ENCODE measurements at regions of chr1 and their contacts with region 1.

Region 1: DNA sequence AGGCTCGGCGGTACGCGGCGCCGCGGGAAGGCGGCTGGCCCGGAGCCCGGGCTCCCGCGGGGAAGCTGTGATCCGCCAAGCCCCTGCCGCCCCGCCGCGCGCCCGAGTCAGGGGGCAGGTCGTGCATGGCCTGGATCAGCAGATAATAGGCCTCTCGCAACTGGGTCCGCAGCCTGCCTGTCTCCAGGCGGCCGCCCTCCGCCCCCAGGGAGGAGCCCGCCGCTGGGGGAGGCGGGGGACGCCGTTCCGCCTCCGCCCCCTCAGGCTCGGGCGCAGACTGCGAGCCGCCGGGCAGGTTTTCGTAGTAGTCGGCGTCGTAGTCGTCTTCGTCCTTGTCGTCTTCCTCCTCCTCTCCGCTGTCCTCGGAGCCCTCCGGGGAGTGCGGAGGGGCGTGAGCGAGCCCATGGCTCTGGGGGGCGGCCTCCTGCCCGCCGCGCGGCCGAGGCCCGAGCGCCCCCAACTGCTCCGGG is at the start of gene SYDE2:
- DNase-seq: peak; percentile 72 to 91 (median 89)
- ATAC-seq: peak; percentile 90
- H3K4me3 ChIP-seq: peak within 1 kb of the TSS; percentile 84
- H3K4me3 Mint-ChIP-seq: peak within 1 kb of the TSS; percentile 86 to 100 (median 98)
- H3K27ac ChIP-seq: peak within 1 kb of the TSS; percentile 96
- H3K27ac Mint-ChIP-seq: peak within 1 kb of the TSS; percentile 88 to 100 (median 99)
- H3K4me1 ChIP-seq: peaks cover 7 to 11% of the 10 kb centered on the region in 2 donors
- H3K4me1 Mint-ChIP-seq: peaks cover 15 to 61% (median 53%) of the 10 kb centered on the region in 7 donors
- H3K27me3 ChIP-seq: no peaks in the 10 kb centered on the region
- H3K27me3 Mint-ChIP-seq: peaks cover 0 to 46% (median 0%) of the 10 kb centered on the region in 5 donors
- total RNA-seq, gene SYDE2: 1.2 to 9.1 (median 8.4) TPM

Region 2: DNA sequence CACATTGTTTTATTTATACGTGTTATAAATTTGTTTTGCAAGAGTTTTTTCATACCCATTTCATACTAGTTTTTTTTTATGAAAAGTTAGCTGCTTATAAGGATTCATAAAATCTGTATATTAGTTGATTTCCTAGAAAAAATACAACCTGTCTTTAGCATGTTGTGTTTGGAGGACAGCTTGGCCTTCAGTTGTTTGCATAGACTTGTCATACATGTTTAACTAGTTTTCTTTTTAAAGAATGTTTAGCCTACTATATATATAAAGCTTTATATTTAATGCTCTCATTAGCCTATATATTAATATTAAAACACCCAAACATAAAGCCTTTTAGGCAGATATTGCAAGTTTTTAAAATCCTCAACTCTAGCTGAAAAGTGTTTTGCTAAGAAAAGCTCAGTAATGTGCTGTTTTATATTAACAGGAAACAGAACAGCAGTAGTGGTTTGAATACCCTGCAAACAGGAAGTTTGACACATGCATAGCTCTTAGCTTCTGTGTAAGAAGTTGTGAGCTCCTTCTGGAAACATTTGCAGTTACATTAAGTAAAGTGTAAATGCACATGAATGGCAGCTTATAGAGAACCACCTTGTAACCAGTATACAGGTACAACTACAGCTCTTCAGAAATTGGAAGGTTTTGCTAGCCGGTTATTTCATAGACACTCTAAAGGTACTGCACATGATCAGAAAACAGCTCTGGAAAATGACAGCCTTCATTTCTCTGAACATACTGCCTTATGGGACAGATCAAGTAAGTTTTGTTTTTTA is 1056.9 kb before region 1 on chr1 and contains the start of gene PRKACB:
- CTCF ChIA-PET with region 1: no interaction called
- POLR2A ChIA-PET with region 1: no interaction called
- intact Hi-C with region 1: loop called in 1 of 2 experiments (anchors 5 kb)
- DNase-seq: peak in 7 of 9 donors; percentile 59 to 79 (median 70)
- ATAC-seq: peak; percentile 94
- H3K4me3 ChIP-seq: peak within 1 kb of the TSS; percentile 71
- H3K4me3 Mint-ChIP-seq: peak within 1 kb of the TSS; percentile 88 to 100 (median 96)
- H3K27ac ChIP-seq: peak within 1 kb of the TSS; percentile 74
- H3K27ac Mint-ChIP-seq: peak within 1 kb of the TSS; percentile 97 to 100 (median 99)
- H3K4me1 ChIP-seq: peaks cover 27 to 33% of the 10 kb centered on the region in 2 donors
- H3K4me1 Mint-ChIP-seq: peaks cover 17 to 51% (median 39%) of the 10 kb centered on the region in 7 donors
- H3K27me3 ChIP-seq: no peaks in the 10 kb centered on the region
- H3K27me3 Mint-ChIP-seq: no peaks in the 10 kb centered on the region
- total RNA-seq, gene PRKACB: 71.1 to 176 (median 89.3) TPM

Region 3: DNA sequence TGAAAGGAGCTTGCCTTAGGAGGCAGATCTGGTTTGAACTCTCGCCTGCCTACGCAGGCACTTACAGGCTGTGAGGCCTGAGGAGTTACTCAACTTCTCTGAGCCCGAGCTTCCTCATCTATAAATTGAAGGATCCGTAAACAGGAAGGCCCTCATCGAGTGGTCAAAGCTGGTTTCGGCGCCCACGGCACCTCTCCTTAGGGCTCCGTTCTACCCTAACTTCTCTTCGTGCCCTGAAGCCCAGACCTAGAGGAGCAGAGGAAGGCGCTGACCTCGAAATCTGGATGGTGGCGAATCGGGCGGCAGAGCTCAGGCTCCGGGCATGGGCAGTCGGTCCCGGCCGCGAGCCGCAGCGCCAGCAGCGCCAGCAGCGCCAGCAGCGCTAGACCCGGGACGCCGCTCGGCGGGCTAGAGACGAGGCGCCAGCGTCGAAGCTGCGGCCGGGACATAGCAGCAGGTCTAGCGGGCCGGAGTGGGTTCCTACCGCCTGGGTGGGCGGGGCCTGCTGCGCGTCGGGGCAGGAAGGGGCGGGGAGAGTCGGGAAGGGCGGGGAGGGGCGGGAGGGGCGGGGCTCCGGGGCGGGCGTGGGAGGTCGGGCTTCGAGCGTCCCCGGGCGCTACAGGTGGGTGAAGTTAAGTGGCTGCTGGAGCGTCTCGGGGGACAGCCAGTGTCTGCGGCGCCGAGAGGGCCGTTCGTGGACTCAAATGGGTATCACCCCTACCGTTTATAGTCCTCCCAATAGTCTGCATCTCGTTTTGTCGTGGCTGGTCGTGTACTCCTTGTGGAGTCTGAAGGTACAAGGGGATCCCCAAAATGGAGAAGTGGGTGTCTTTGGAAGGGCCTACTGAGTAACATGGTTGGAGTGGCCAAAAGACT is 626.7 kb before region 1 on chr1 and contains the start of gene CTBS:
- CTCF ChIA-PET with region 1: no interaction called
- POLR2A ChIA-PET with region 1: interaction called, 3 read pairs
- intact Hi-C with region 1: loop called in 1 of 2 experiments (anchors 5 kb)
- DNase-seq: peak; percentile 69 to 84 (median 82)
- ATAC-seq: peak; percentile 96
- H3K4me3 ChIP-seq: peak within 1 kb of the TSS; percentile 77
- H3K4me3 Mint-ChIP-seq: peak within 1 kb of the TSS; percentile 97 to 99 (median 99)
- H3K27ac ChIP-seq: peak within 1 kb of the TSS; percentile 99
- H3K27ac Mint-ChIP-seq: peak within 1 kb of the TSS; percentile 98 to 100 (median 100)
- H3K4me1 ChIP-seq: peaks cover 9 to 13% of the 10 kb centered on the region in 2 donors
- H3K4me1 Mint-ChIP-seq: peaks cover 29 to 51% (median 40%) of the 10 kb centered on the region in 7 donors
- H3K27me3 ChIP-seq: no peaks in the 10 kb centered on the region
- H3K27me3 Mint-ChIP-seq: peaks cover 0 to 2% (median 0%) of the 10 kb centered on the region in 5 donors
- total RNA-seq, gene CTBS: 17.4 to 22.3 (median 19.0) TPM

Region 4: GRCh38 chr1:85061711-85062424 is 139.0 kb before region 1 on chr1:
- CTCF ChIA-PET with region 1: no interaction called
- POLR2A ChIA-PET with region 1: no interaction called
- intact Hi-C with region 1: loop called (anchors 1 to 5 kb)
- DNase-seq: peak; percentile 49 to 93 (median 86)
- ATAC-seq: peak; percentile 99
- H3K4me3 ChIP-seq: peak overlapping the region; percentile 57
- H3K4me3 Mint-ChIP-seq: peak overlapping the region; percentile 79 to 93 (median 88)
- H3K27ac ChIP-seq: peak overlapping the region; percentile 24
- H3K27ac Mint-ChIP-seq: peak overlapping the region; percentile 57 to 96 (median 92)
- H3K4me1 ChIP-seq: peaks cover 4 to 6% of the 10 kb centered on the region in 2 donors
- H3K4me1 Mint-ChIP-seq: peaks cover 11 to 21% (median 14%) of the 10 kb centered on the region in 7 donors
- H3K27me3 ChIP-seq: no peaks in the 10 kb centered on the region
- H3K27me3 Mint-ChIP-seq: peaks cover 3 to 39% (median 13%) of the 10 kb centered on the region in 5 donors

Region 5: DNA sequence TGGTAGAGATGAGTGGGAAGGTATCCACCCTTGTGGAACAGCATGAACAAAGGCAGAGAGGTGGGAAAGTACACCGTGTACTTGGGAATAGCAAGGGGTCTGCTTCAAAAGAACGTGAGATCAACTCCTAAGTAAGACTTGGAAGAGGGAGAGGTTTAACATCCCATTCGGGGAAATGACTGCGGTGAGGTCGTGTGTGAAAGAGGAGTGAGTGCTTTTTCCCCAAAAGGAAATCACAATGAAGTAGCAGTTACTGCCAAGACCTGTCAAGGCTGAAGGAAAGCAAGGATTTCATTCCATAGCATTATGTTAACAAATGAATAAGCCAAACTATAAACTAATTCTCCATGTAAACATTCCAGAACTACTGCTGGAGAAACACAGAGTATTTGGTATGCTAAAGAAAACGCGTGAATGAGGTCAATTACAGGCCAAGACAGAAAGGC is 19.9 kb after region 1 on chr1:
- CTCF ChIA-PET with region 1: no interaction called
- POLR2A ChIA-PET with region 1: no interaction called
- intact Hi-C with region 1: loop called in 1 of 2 experiments (anchors 2 kb)
- DNase-seq: no peak
- ATAC-seq: no peak
- H3K4me3 ChIP-seq: no peak overlapping the region
- H3K4me3 Mint-ChIP-seq: no peak overlapping the region
- H3K27ac ChIP-seq: no peak overlapping the region
- H3K27ac Mint-ChIP-seq: no peak overlapping the region
- H3K4me1 ChIP-seq: no peaks in the 10 kb centered on the region
- H3K4me1 Mint-ChIP-seq: no peaks in the 10 kb centered on the region
- H3K27me3 ChIP-seq: peaks cover 0 to 5% of the 10 kb centered on the region in 2 donors
- H3K27me3 Mint-ChIP-seq: peaks cover 7 to 52% (median 18%) of the 10 kb centered on the region in 5 donors

Region 6: DNA sequence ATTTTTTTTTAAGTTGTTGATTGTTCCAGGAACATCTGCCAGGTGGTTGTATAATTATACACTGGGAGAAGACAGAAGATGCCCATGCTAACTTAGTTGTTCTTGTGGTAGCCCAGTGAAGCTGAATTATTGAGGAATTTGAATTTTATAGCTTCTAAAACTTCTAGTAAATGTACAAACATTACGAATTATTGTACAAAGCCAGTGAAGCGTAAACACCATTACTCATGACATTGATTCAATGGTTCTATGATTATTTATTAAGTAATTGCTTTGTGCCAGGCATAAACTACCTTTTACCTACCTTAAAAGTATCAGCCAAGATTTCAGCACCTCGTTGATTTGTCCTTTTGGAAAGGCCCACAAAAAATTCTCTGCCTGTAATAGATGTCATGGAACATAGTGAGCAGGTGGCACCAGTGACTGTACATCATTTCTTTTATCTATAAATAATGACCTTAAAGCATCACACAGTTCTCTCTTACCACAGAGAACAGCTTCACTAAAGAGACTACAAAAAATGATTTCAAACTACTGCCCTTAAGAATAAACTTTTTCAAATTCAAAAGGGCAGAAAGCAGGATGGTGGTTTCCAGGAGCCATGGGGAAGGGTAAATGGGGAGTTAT is 150.4 kb after region 1 on chr1:
- CTCF ChIA-PET with region 1: no interaction called
- POLR2A ChIA-PET with region 1: no interaction called
- intact Hi-C with region 1: no loop called
- DNase-seq: no peak
- ATAC-seq: no peak
- H3K4me3 ChIP-seq: no peak overlapping the region
- H3K4me3 Mint-ChIP-seq: no peak overlapping the region
- H3K27ac ChIP-seq: no peak overlapping the region
- H3K27ac Mint-ChIP-seq: no peak overlapping the region
- H3K4me1 ChIP-seq: no peaks in the 10 kb centered on the region
- H3K4me1 Mint-ChIP-seq: no peaks in the 10 kb centered on the region
- H3K27me3 ChIP-seq: no peaks in the 10 kb centered on the region
- H3K27me3 Mint-ChIP-seq: peaks cover 0 to 9% (median 0%) of the 10 kb centered on the region in 5 donors

Region 7: GRCh38 chr1:85707990-85708828 is 507.3 kb after region 1 on chr1 and contains the start of gene ZNHIT6:
- CTCF ChIA-PET with region 1: no interaction called
- POLR2A ChIA-PET with region 1: no interaction called
- intact Hi-C with region 1: loop called (anchors 1 to 2 kb)
- DNase-seq: peak; percentile 62 to 94 (median 89)
- ATAC-seq: peak; percentile 99
- H3K4me3 ChIP-seq: peak within 1 kb of the TSS; percentile 90
- H3K4me3 Mint-ChIP-seq: no peak within 1 kb of the TSS
- H3K27ac ChIP-seq: peak within 1 kb of the TSS; percentile 77
- H3K27ac Mint-ChIP-seq: no peak within 1 kb of the TSS
- H3K4me1 ChIP-seq: peaks cover 14 to 21% of the 10 kb centered on the region in 2 donors
- H3K4me1 Mint-ChIP-seq: peaks cover 11 to 33% (median 18%) of the 10 kb centered on the region in 7 donors
- H3K27me3 ChIP-seq: no peaks in the 10 kb centered on the region
- H3K27me3 Mint-ChIP-seq: no peaks in the 10 kb centered on the region
- total RNA-seq, gene ZNHIT6: 13.8 to 22.2 (median 20.2) TPM

Region 8: DNA sequence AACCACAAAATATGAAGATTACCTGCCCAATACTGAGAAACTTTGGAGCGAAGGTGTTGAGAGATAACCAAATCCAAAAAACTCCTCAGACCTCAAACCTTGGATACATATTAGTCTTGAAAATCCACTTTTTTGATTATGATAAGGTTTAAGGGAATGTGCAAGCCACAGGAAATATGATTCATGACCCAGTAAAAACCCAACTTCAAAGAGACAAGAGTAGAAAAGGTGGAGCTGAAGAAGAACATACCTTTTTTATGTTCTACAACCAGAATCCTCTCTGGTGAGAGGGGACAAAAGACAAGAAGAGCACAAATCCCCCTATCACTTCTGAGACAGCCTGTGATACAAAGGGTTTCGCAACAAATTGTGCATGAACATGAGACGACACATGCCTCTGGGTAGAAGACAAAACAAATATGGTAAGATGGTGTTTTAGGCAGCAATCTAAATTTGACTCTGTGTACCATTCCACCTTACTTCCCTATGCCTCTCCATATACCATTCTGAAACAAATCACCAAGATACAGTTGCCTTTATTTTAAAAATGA is 918.4 kb after region 1 on chr1:
- CTCF ChIA-PET with region 1: no interaction called
- POLR2A ChIA-PET with region 1: no interaction called
- intact Hi-C with region 1: no loop called
- DNase-seq: no peak
- ATAC-seq: no peak
- H3K4me3 ChIP-seq: no peak overlapping the region
- H3K4me3 Mint-ChIP-seq: peak overlapping the region in 1 of 10 donors; percentile 33
- H3K27ac ChIP-seq: no peak overlapping the region
- H3K27ac Mint-ChIP-seq: peak overlapping the region in 1 of 9 donors; percentile 63
- H3K4me1 ChIP-seq: no peaks in the 10 kb centered on the region
- H3K4me1 Mint-ChIP-seq: peaks cover 0 to 8% (median 0%) of the 10 kb centered on the region in 7 donors
- H3K27me3 ChIP-seq: no peaks in the 10 kb centered on the region
- H3K27me3 Mint-ChIP-seq: no peaks in the 10 kb centered on the region

Measured in naive thymus-derived CD4-positive, alpha-beta T cell (primary cell).